PC-9 (cell line): ENCODE measurements at regions of chr9 and their contacts with region 1.

Region 1: GRCh38 chr9:133691626-133692363 is 46.4 kb downstream of the SARDH start:
- DNase-seq: peak; percentile 33 to 39
- H3K4me3 ChIP-seq: no peak overlapping the region
- H3K27ac ChIP-seq: no peak overlapping the region
- H3K4me1 ChIP-seq: peaks cover 26% of the 10 kb centered on the region
- H3K27me3 ChIP-seq: peaks cover 39% of the 10 kb centered on the region
- CTCF ChIP-seq: no peak

Region 2: DNA sequence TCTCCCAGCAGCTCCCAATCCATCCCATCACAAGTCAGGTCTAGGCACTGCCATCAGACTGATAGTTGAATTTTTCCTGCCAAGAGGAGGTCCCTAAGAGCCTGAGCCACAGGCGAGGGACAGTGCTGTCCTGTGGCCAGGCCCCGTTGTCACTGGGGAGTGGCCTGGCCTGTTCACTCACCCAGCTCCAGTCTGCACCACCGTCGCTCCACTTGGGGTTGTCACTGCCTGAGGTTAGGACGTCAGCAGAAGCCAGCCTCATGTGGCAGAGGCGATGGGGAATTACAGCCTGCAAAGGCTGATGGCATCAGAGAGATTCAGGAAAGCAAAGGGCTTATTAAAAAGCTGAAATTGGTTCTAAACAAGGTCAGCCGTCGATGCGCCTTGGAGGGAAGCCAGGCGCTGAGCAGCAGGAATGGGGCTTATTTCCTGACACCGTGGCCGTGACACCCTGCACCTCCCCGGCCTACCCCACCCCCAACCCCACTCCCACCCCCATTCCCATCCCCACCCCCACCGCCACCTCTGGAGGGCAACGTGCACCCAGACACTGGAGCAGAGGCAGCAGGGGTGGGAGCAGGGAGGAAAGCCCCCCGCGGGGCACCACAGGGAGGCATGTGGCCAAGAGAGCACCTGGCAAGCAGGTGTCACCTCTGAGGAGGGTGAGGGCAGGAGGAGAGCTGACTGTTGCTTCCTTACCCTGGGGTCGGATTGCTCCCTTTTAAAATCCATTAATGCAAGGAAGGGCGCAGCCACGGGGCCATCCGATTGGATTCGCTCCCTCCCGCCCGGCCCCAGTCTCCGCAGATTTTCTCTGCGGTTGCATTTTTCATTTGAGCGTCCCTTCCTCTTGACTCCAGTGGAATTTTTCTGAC is 58.8 kb before region 1 on chr9:
- CTCF ChIA-PET with region 1: no interaction called
- POLR2A ChIA-PET with region 1: interaction called, 16 read pairs
- intact Hi-C with region 1: no loop called
- DNase-seq: no peak
- H3K4me3 ChIP-seq: no peak overlapping the region
- H3K27ac ChIP-seq: no peak overlapping the region
- H3K4me1 ChIP-seq: no peaks in the 10 kb centered on the region
- H3K27me3 ChIP-seq: peaks cover 96% of the 10 kb centered on the region
- CTCF ChIP-seq: no peak

Region 3: DNA sequence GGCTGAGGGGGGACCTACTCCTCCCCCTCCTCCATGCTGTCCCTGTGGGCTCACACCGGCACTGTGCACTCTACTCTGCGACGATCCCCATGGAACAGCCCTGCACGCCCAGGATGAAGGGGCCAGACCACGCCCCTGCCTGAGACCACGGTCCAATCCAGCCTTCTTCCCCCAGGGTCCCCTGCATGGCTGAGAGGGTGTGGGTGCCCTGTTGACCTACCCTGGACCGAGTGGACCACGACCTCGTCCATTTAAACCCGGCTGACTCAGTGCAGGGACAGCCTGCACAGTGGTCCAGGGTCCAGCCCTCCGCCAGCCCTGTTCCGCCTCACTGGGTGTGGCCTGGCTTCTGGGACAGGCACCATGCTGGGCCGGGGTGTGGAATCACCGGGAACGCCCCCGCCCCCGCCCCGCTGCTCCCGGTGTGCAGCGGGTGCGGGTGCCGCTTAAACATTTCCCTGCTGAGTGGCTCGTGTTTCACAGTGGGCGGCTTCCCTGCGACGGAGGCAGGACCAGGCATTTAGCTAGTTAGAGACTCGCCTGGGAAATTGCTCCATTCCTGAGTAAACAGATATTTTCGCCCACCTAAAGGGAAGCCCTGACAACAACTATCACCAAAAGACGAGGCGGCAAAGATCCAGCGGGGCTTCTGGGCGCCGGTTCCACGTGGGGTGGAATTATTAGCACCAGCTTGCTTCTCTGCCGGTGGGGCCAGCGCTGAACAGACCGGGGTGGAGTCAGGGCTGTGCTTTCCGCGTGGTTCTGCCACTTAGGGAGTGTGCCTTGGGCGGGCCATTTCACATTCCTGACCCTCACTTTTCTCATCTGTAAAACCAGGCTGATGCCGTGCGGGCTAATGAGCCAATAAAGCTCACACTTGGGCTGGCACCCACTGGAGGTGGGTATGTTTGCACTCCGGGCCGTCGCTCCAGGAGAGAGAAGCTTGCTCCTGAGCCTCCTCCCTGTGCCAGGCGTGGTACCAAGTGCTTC is 33.1 kb before region 1 on chr9:
- CTCF ChIA-PET with region 1: no interaction called
- POLR2A ChIA-PET with region 1: interaction called, 19 read pairs
- intact Hi-C with region 1: no loop called
- DNase-seq: peak in 1 of 2 experiments; percentile 55
- H3K4me3 ChIP-seq: no peak overlapping the region
- H3K27ac ChIP-seq: no peak overlapping the region
- H3K4me1 ChIP-seq: no peaks in the 10 kb centered on the region
- H3K27me3 ChIP-seq: peaks cover 99% of the 10 kb centered on the region
- CTCF ChIP-seq: no peak

Region 4: GRCh38 chr9:133714606-133715294 is 23.0 kb after region 1 on chr9:
- CTCF ChIA-PET with region 1: no interaction called
- POLR2A ChIA-PET with region 1: no interaction called
- intact Hi-C with region 1: loop called (anchors 1 kb)
- DNase-seq: peak in 1 of 2 experiments; percentile 70
- H3K4me3 ChIP-seq: no peak overlapping the region
- H3K27ac ChIP-seq: no peak overlapping the region
- H3K4me1 ChIP-seq: no peaks in the 10 kb centered on the region
- H3K27me3 ChIP-seq: peaks cover 51% of the 10 kb centered on the region
- CTCF ChIP-seq: no peak